ENCODE measurements at regions of chr4 and their contacts with region 1.

Region 1: DNA sequence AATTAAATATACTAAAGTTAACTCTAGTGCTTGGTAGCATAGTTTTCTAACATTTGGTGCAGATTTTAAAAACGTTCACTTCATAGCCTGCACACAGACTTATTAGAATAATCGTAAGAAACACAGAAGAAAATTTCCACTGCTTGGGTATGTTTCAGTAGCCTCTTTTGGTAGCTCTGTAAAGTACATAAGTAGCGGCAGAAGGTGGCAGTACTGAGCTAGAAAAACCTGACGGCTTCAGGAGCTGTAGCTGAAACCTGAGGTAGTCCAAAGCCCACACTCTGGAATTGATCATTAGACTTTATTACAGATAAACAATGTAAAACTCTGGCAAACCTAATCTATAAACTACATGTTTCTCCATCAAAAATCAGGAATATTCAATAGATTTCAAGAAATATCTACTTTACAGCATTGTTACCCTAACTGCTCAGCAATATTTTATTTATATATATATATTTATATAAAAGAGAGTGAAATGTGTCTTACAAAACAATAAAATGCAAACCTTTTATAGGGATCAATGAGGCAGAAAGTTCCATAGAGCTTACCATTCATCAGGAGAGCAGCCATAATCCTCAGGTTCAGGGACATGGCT is 88.2 kb downstream of the ATP8A1 start:
- DNase-seq: peak; percentile 17
- ATAC-seq: peak; percentile 76
- H3K4me3 ChIP-seq: no peak overlapping the region
- H3K27ac ChIP-seq: no peak overlapping the region
- H3K4me1 ChIP-seq: no peaks in the 10 kb centered on the region
- H3K27me3 ChIP-seq: no peaks in the 10 kb centered on the region
- CTCF ChIP-seq: peak; percentile 62

Region 2: GRCh38 chr4:42778349-42778748 is 209.6 kb after region 1 on chr4:
- CTCF ChIA-PET with region 1: no interaction called
- POLR2A ChIA-PET with region 1: no interaction called
- in situ Hi-C with region 1: no loop called
- intact Hi-C with region 1: loop called (anchors 10 kb)
- DNase-seq: no peak
- ATAC-seq: no peak
- H3K4me3 ChIP-seq: no peak overlapping the region
- H3K27ac ChIP-seq: no peak overlapping the region
- H3K4me1 ChIP-seq: no peaks in the 10 kb centered on the region
- H3K27me3 ChIP-seq: no peaks in the 10 kb centered on the region
- CTCF ChIP-seq: no peak

Region 3: DNA sequence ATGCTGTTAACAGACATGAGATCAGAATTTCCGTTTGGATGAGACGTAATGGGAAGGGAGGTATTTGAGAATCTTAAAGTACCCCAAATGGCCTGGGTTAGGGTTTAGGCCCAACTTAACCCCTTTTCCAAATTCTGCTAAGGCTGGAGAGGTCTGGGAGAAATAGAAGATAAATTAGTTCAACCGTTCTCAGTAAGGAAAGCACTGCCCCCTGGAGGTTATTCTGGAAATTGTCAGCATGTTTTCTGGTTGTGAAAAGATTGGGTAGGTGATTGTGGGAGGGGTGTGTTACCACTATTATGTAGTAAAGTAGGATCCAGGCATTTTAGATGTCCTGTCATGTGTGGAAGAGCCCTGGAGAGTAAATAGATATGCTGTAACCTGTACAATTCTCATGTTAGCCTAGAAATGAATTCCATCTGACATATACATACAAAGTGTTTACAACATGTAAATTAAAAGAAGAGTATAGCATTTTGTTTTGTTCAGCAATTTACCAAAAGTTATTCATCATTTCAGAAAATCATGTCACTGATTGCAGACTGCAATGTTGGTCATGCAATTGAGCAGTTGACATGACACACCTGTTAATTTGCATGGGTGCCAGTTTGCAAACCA is 297.0 kb after region 1 on chr4:
- CTCF ChIA-PET with region 1: no interaction called
- POLR2A ChIA-PET with region 1: no interaction called
- in situ Hi-C with region 1: no loop called
- intact Hi-C with region 1: loop called (anchors 2 kb)
- DNase-seq: peak; percentile 18
- ATAC-seq: no peak
- H3K4me3 ChIP-seq: no peak overlapping the region
- H3K27ac ChIP-seq: no peak overlapping the region
- H3K4me1 ChIP-seq: no peaks in the 10 kb centered on the region
- H3K27me3 ChIP-seq: no peaks in the 10 kb centered on the region
- CTCF ChIP-seq: peak; percentile 70

Measured in Panc1 (cell line).